ENCODE measurements at regions of chr5 and their contacts with region 1.

Region 1: GRCh38 chr5:142807372-142807911 is 37.3 kb downstream of the ARHGAP26 start:
- DNase-seq: peak; percentile 97
- ATAC-seq: peak; percentile 96
- H3K4me3 ChIP-seq: peak overlapping the region in 2 of 3 experiments; percentile 27 to 32; a peak in 3 of 6 replicates
- H3K27ac ChIP-seq: peak overlapping the region; percentile 58
- H3K4me1 ChIP-seq: peaks cover 78% of the 10 kb centered on the region
- H3K27me3 ChIP-seq: no peaks in the 10 kb centered on the region
- CTCF ChIP-seq: no peak
- EP300 ChIP-seq: peak; percentile 84 to 96
- POLR2A ChIP-seq: no peak
- RAD21 ChIP-seq: peak; percentile 47

Region 2: DNA sequence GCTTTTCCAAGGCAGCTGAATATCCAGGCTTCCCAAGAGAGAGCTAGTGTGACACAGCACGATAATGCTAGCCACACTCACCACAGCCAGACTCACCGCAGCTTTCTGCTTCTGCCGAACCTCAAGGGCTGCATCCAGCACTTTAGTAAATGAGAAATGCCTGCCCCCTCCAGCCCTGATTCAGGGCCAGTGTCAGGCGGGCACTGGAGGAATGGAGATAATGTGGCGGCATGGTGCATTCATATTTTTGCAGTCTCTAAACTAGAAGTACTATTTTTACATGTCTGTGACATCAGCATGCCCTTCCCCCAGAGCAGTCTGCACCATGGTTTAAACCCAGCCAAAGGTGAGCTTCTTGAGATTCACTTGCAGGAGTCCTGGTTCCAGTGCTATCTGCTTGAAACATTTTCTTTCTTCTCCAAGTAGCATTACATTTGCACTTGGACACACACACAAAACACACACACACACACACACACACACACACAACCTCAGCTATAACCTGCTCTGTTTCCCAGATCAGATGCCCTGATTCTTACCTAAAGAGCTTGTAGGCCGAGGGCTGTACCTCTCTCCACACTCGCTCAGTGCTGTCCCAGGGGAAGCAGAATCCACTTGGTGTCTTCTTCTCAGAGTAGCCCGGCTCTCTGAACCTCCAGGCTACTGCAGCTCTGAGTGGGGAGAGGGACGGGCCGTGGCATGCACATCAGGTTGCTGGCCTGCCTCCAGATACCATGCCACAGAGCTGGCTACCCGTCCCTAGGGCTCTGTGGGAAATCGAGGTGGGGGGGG is 121.8 kb before region 1 on chr5 and contains the start of gene FGF1:
- CTCF ChIA-PET with region 1: no interaction called
- POLR2A ChIA-PET with region 1: no interaction called
- in situ Hi-C with region 1: no loop called
- intact Hi-C with region 1: no loop called
- DNase-seq: no peak
- ATAC-seq: peak; percentile 72
- H3K4me3 ChIP-seq: peak within 1 kb of the TSS in 1 of 3 experiments; percentile 47; a peak in 1 of 6 replicates
- H3K27ac ChIP-seq: no peak within 1 kb of the TSS
- H3K4me1 ChIP-seq: peaks cover 49% of the 10 kb centered on the region
- H3K27me3 ChIP-seq: peaks cover 0 to 4% of the 10 kb centered on the region in 2 experiments; a peak in 3 of 5 replicates
- CTCF ChIP-seq: no peak
- EP300 ChIP-seq: no peak
- POLR2A ChIP-seq: no peak
- RAD21 ChIP-seq: no peak
- total RNA-seq, gene FGF1: not detected in 2 replicates

Region 3: DNA sequence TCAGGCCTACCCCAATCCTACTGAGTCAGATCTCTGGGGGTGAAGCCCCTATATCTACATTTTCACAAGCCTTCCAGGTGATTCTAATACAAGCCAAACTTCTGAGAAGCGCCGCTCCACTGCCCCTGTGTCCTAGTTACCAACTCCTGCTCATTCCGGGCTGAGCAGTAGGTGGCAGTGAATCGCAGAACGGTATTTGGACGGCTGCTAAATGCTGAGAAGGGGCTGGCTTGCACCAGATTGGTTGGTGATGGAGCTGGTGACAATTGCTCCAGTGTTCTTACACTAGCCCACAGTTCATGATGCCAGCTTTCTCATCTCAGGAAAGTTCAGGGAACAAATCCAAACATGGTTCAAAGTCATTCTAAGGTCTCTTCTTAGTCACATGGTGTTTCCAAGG is 90.5 kb before region 1 on chr5:
- CTCF ChIA-PET with region 1: no interaction called
- POLR2A ChIA-PET with region 1: no interaction called
- in situ Hi-C with region 1: no loop called
- intact Hi-C with region 1: no loop called
- DNase-seq: peak; percentile 54
- ATAC-seq: peak; percentile 85
- H3K4me3 ChIP-seq: no peak overlapping the region
- H3K27ac ChIP-seq: no peak overlapping the region
- H3K4me1 ChIP-seq: peaks cover 44% of the 10 kb centered on the region
- H3K27me3 ChIP-seq: peaks cover 4 to 47% of the 10 kb centered on the region in 2 experiments; a peak in 4 of 5 replicates
- CTCF ChIP-seq: peak; percentile 77
- EP300 ChIP-seq: no peak
- POLR2A ChIP-seq: no peak
- RAD21 ChIP-seq: 0 out of 2 replicates have a peak, but pooled peaks have one; percentile 15

Region 4: GRCh38 chr5:142796492-142797109 is 10.8 kb before region 1 on chr5:
- CTCF ChIA-PET with region 1: no interaction called
- POLR2A ChIA-PET with region 1: no interaction called
- in situ Hi-C with region 1: no loop called
- intact Hi-C with region 1: loop called (anchors 1 kb)
- DNase-seq: no peak
- ATAC-seq: peak; percentile 67
- H3K4me3 ChIP-seq: peak overlapping the region in 2 of 3 experiments; percentile 10 to 14; a peak in 2 of 6 replicates
- H3K27ac ChIP-seq: peak overlapping the region; percentile 10
- H3K4me1 ChIP-seq: peaks cover 50% of the 10 kb centered on the region
- H3K27me3 ChIP-seq: no peaks in the 10 kb centered on the region
- CTCF ChIP-seq: no peak
- EP300 ChIP-seq: no peak
- POLR2A ChIP-seq: no peak
- RAD21 ChIP-seq: no peak

Region 5: DNA sequence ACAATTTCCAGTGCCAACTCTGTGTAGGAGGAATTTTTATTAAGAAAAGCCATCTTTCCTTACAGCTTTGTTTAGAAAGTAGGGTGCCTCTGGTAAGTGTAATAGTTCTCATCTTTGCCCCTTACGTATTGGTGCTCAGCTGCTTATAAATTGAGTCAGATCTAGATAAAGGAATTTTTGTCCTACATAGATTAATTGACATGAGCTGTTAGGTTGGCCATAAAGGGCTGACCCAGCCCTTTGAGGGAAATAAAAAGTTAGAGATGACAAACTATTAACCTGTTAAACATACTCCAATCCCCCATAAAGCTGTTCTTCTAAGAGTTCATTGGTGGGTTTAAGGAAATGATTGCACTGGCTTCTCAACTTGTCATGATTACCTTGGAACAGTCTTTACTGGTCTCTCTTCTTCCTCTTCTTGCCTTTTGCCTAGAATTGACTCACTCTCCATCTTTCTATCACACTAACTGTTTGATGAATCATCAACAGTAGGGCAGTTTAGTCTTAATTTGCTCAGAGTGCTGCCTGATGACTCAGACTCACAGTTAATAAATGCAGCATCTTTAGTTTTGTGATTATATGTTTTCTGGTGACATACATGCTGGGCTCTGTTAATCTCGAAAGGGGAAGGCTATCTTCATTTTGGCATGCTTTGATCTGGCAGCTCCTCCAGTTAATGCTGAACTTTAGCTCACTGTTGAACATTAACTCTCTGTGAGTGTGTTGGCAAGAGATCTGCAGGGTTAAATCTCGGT is 14.5 kb after region 1 on chr5:
- CTCF ChIA-PET with region 1: no interaction called
- POLR2A ChIA-PET with region 1: interaction called, 10 read pairs
- in situ Hi-C with region 1: no loop called
- intact Hi-C with region 1: loop called (anchors 1 kb)
- DNase-seq: peak; percentile 85
- ATAC-seq: peak; percentile 66
- H3K4me3 ChIP-seq: peak overlapping the region in 1 of 3 experiments; percentile 25; a peak in 1 of 6 replicates
- H3K27ac ChIP-seq: peak overlapping the region; percentile 91
- H3K4me1 ChIP-seq: peaks cover 99% of the 10 kb centered on the region
- H3K27me3 ChIP-seq: no peaks in the 10 kb centered on the region
- CTCF ChIP-seq: no peak
- EP300 ChIP-seq: peak in 1 of 2 experiments; percentile 35; a peak in 1 of 4 replicates
- POLR2A ChIP-seq: no peak
- RAD21 ChIP-seq: no peak

Region 6: DNA sequence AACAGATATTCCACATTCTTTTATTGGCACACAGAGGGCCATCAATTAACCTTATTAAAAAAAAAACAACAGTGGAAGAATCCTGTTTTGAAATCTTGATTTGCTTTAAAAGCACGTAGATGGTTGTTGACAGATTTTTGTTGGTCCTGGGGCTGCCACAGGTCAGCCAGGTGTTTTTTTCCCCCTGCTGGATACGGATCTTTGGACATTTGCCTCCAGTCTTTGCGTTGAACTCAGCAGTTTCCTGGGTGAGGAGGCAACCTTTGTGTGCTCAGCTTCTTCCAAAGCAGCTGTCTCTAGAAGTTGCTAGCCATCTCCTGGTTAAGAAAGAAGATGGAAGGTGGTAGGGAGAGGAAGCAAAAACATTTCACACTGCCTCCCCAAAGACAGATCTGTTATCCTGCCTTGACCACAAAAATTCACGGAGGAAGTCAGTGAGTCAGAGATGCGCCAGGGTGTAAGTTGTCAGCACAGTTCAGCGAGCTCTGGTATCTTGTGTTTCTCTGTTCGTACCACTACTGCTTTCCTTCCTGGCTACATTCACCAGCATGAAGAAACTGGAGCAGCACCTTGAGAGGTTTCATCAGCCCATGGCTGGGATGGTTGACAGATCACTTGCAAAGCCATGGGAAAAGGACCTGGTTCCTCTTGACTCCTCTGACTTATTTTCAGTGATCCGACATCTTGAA is 170.1 kb after region 1 on chr5:
- CTCF ChIA-PET with region 1: no interaction called
- POLR2A ChIA-PET with region 1: no interaction called
- in situ Hi-C with region 1: no loop called
- intact Hi-C with region 1: no loop called
- DNase-seq: no peak
- ATAC-seq: no peak
- H3K4me3 ChIP-seq: no peak overlapping the region
- H3K27ac ChIP-seq: no peak overlapping the region
- H3K4me1 ChIP-seq: peaks cover 31% of the 10 kb centered on the region
- H3K27me3 ChIP-seq: no peaks in the 10 kb centered on the region
- CTCF ChIP-seq: no peak
- EP300 ChIP-seq: no peak
- POLR2A ChIP-seq: no peak
- RAD21 ChIP-seq: no peak

Region 7: GRCh38 chr5:143372187-143372829 is 564.9 kb after region 1 on chr5:
- CTCF ChIA-PET with region 1: no interaction called
- POLR2A ChIA-PET with region 1: no interaction called
- in situ Hi-C with region 1: no loop called
- intact Hi-C with region 1: no loop called
- DNase-seq: no peak
- ATAC-seq: no peak
- H3K4me3 ChIP-seq: no peak overlapping the region
- H3K27ac ChIP-seq: no peak overlapping the region
- H3K4me1 ChIP-seq: no peaks in the 10 kb centered on the region
- H3K27me3 ChIP-seq: no peaks in the 10 kb centered on the region
- CTCF ChIP-seq: no peak
- EP300 ChIP-seq: no peak
- POLR2A ChIP-seq: no peak
- RAD21 ChIP-seq: no peak

Measured in HepG2 (cell line).